IMR-90 (cell line): ENCODE measurements at regions of chr5 and their contacts with region 1.

Region 1: GRCh38 chr5:159133041-159133741 is 33.5 kb upstream of the EBF1 start:
- DNase-seq: peak; percentile 67
- ATAC-seq: peak; percentile 78
- H3K4me3 ChIP-seq: no peak overlapping the region
- H3K27ac ChIP-seq: no peak overlapping the region
- H3K4me1 ChIP-seq: peaks cover 2% of the 10 kb centered on the region
- H3K27me3 ChIP-seq: peaks cover 10% of the 10 kb centered on the region
- CTCF ChIP-seq: peak; percentile 90
- POLR2A ChIP-seq: no peak
- RAD21 ChIP-seq: peak; percentile 86

Region 2: DNA sequence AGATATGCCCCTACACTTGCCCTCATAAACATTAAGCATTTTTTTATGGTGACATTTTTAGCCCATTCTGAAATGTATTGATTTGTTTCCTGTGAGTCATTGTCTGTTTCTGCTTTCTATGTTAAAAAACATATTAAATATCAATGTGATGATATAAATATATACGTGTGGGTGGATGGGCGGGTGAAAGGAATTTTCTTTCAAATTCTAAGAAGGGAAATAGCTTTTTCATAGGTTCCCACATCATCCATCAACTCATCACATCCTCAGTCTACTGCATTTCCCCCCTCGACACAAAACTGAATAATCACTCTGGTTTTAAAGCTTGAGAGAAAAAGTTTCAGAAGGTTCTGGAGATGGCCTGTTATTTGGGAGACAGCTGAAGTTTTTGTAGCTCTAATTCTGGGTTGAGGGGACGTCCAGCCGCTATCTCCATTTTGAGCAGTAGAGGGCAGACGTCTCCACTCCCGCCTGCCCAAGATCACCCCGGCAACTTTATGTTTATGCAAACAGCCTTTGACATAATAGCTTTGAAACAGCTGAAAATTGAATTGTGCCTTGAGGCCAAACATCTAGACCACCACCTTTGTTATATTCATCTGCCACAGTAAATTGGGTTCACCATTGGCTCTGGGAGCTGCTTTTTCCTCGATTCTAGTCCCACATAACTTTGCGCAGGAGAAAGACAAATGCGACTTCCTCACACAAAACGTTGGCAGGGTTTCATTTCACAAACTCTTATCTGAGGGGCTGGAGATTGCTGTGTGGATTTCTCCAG is 1058.0 kb before region 1 on chr5:
- CTCF ChIA-PET with region 1: interaction called, 5 read pairs
- POLR2A ChIA-PET with region 1: no interaction called
- dilution Hi-C with region 1: no loop called
- in situ Hi-C with region 1: no loop called
- intact Hi-C with region 1: loop called (anchors 1 kb)
- DNase-seq: peak; percentile 61
- ATAC-seq: peak; percentile 98
- H3K4me3 ChIP-seq: peak overlapping the region; percentile 20; the same call in 1 of the 2 replicates
- H3K27ac ChIP-seq: no peak overlapping the region
- H3K4me1 ChIP-seq: no peaks in the 10 kb centered on the region
- H3K27me3 ChIP-seq: no peaks in the 10 kb centered on the region
- CTCF ChIP-seq: peak; percentile 75
- POLR2A ChIP-seq: no peak
- RAD21 ChIP-seq: peak; percentile 59

Region 3: GRCh38 chr5:158174918-158175851 is 958.0 kb before region 1 on chr5:
- CTCF ChIA-PET with region 1: no interaction called
- POLR2A ChIA-PET with region 1: no interaction called
- dilution Hi-C with region 1: no loop called
- in situ Hi-C with region 1: no loop called
- intact Hi-C with region 1: loop called (anchors 1 kb)
- DNase-seq: peak; percentile 56
- ATAC-seq: peak; percentile 77
- H3K4me3 ChIP-seq: no peak overlapping the region
- H3K27ac ChIP-seq: no peak overlapping the region
- H3K4me1 ChIP-seq: no peaks in the 10 kb centered on the region
- H3K27me3 ChIP-seq: no peaks in the 10 kb centered on the region; the same call in none of the 2 replicates
- CTCF ChIP-seq: peak; percentile 86
- POLR2A ChIP-seq: 0 out of 2 replicates have a peak, but pooled peaks have one; percentile 28
- RAD21 ChIP-seq: peak; percentile 94

Region 4: DNA sequence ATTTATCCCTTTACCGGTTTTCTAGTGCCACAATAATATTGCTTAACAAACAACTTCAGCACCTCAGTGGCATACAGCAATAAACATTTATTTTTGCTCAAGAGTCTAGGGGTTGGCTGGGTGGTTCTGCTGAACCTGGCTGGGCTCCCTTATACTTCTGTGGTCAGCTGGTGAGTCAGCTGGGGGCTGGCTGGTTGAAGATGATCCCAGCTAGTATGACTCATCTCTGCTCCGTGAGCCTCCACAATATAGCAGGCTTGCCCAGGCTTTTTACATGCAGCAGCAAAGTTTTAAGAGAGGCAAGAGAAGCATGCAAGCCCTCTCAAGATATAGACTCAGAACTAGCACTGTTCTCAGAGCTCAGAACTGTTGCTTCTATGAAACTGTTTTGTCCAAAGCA is 750.7 kb before region 1 on chr5:
- CTCF ChIA-PET with region 1: no interaction called
- POLR2A ChIA-PET with region 1: no interaction called
- dilution Hi-C with region 1: no loop called
- in situ Hi-C with region 1: no loop called
- intact Hi-C with region 1: loop called (anchors 10 kb)
- DNase-seq: peak; percentile 97
- ATAC-seq: peak; percentile 91
- H3K4me3 ChIP-seq: no peak overlapping the region
- H3K27ac ChIP-seq: no peak overlapping the region
- H3K4me1 ChIP-seq: peaks cover 8% of the 10 kb centered on the region
- H3K27me3 ChIP-seq: no peaks in the 10 kb centered on the region
- CTCF ChIP-seq: no peak
- POLR2A ChIP-seq: no peak
- RAD21 ChIP-seq: peak; percentile 2; the same call in 1 of the 2 replicates

Region 5: DNA sequence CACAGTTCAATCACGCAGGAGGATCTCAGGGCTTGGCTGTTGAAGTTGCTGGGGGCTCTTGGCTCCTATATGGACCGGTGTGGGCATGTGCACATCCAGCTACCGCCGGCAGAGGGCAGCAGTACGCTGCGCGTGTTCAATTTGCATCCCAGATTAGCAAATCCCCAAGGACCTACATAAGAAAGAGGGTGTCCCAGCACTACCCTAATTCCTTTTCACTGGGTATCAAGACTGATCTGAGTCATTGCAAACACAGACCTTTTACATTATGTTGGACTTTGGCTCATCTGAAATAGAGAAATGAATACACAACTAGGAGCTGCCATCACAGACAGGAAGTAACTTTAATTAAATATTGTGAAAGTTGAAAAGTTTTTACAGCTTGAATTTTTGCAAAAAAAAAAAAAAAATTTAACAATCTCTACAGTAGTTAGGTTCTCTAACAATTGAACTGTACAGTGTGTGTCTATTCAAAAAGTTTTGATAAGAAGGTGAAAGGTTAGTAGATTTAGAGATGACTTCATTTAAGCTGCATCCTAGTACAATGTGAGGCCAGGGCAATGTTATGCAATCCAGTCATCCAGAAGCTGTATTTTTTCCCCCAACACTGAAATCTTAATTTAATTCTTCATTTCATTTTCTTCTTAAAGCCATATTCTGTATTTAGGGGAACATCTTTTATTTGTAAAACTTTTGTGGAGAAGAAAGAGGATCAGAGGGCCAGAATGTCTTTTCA is 437.4 kb before region 1 on chr5:
- CTCF ChIA-PET with region 1: interaction called, 17 read pairs
- POLR2A ChIA-PET with region 1: no interaction called
- dilution Hi-C with region 1: loop called (anchors 25 kb)
- in situ Hi-C with region 1: no loop called
- intact Hi-C with region 1: loop called (anchors 1 kb)
- DNase-seq: peak; percentile 60
- ATAC-seq: peak; percentile 95
- H3K4me3 ChIP-seq: no peak overlapping the region
- H3K27ac ChIP-seq: no peak overlapping the region
- H3K4me1 ChIP-seq: no peaks in the 10 kb centered on the region
- H3K27me3 ChIP-seq: peaks cover 2% of the 10 kb centered on the region; the same call in 1 of the 2 replicates
- CTCF ChIP-seq: peak; percentile 90
- POLR2A ChIP-seq: no peak
- RAD21 ChIP-seq: peak; percentile 89